Activated naive CD4-positive, alpha-beta T cell treated with anti-CD3 and anti-CD28 coated beads for 36 hours (primary cell): ENCODE measurements at regions of chr15 and their contacts with region 1.

Region 1: DNA sequence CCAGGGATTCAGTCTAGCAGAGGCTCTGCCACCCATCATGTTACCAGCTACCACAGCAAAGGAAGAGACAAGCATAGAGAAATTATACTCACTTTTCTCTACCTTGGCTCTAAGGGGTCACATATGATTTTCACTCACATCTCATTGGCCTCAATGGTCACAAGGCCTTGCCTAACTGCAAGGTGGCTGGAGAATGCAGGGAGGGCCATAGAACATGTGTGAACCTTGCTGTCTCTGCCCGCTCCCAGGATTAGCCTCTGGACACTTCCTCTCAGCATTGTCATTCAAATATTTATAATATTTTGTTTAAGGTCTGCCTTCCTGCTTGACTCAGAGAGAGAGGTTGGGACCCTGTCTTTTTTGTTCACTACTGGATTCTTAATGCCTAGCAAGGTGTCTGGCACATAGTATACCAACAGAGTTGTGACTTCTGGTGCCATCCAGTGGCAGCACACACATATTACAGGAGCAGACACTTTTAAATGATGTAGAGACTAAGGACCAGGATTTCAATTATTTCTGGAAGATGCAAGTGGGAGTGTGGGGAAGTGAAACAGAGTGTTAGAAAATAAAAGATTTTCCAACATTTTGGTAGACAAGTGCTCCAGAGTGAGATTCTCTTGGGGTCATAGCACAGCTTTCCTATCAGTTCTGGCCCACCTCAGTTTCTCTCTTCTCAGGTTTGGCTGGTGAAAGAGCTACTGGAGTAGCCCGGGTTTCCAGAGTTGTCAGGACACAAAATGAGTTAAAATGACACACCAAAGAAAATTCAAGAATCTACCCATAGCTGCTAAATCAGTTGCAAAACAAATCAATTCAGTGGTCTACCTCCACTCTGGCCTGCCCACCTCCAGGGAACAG is 119.0 kb upstream of the RASGRP1 start:
- DNase-seq: peak; percentile 89
- H3K4me3 Mint-ChIP-seq: no peak overlapping the region
- H3K27ac Mint-ChIP-seq: peak overlapping the region; percentile 38
- H3K4me1 Mint-ChIP-seq: peaks cover 66% of the 10 kb centered on the region
- H3K27me3 Mint-ChIP-seq: no peaks in the 10 kb centered on the region

Region 2: GRCh38 chr15:38217191-38217595 is 466.4 kb before region 1 on chr15:
- CTCF ChIA-PET with region 1: no interaction called
- intact Hi-C with region 1: no loop called
- DNase-seq: peak; percentile 7
- H3K4me3 Mint-ChIP-seq: no peak overlapping the region
- H3K27ac Mint-ChIP-seq: no peak overlapping the region
- H3K4me1 Mint-ChIP-seq: peaks cover 2% of the 10 kb centered on the region
- H3K27me3 Mint-ChIP-seq: peaks cover 3% of the 10 kb centered on the region

Region 3: GRCh38 chr15:38474155-38474757 is 209.4 kb before region 1 on chr15:
- CTCF ChIA-PET with region 1: interaction called, 58 read pairs
- intact Hi-C with region 1: loop called (anchors 1 kb)
- DNase-seq: peak; percentile 30
- H3K4me3 Mint-ChIP-seq: no peak overlapping the region
- H3K27ac Mint-ChIP-seq: peak overlapping the region; percentile 55
- H3K4me1 Mint-ChIP-seq: peaks cover 4% of the 10 kb centered on the region
- H3K27me3 Mint-ChIP-seq: no peaks in the 10 kb centered on the region

Region 4: GRCh38 chr15:38610748-38611147 is 72.9 kb before region 1 on chr15:
- CTCF ChIA-PET with region 1: interaction called, 14 read pairs
- intact Hi-C with region 1: loop called (anchors 2 kb)
- DNase-seq: peak; percentile 32
- H3K4me3 Mint-ChIP-seq: no peak overlapping the region
- H3K27ac Mint-ChIP-seq: peak overlapping the region; percentile 61
- H3K4me1 Mint-ChIP-seq: peaks cover 40% of the 10 kb centered on the region
- H3K27me3 Mint-ChIP-seq: no peaks in the 10 kb centered on the region

Region 5: DNA sequence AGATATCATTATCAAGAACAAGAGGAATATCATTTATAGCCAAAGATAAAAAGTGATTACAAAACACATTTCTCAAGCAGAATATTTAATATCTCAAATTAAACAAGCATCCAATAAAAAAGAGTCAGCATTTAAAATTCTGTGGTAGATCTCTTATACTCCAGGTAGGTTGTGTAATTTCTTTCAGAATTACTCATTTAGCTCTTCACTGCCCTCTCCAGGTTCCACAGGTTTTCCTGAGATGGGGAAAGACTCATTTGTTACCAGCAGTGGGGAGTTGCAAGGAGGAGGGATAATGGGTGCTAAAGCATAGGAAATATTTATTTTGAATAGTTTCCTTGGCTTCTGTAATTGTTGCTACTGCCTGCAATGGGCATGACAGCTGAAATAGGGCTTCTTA is 35.9 kb before region 1 on chr15:
- CTCF ChIA-PET with region 1: interaction called, 38 read pairs
- intact Hi-C with region 1: no loop called
- DNase-seq: no peak
- H3K4me3 Mint-ChIP-seq: no peak overlapping the region
- H3K27ac Mint-ChIP-seq: no peak overlapping the region
- H3K4me1 Mint-ChIP-seq: peaks cover 68% of the 10 kb centered on the region
- H3K27me3 Mint-ChIP-seq: no peaks in the 10 kb centered on the region

Region 6: DNA sequence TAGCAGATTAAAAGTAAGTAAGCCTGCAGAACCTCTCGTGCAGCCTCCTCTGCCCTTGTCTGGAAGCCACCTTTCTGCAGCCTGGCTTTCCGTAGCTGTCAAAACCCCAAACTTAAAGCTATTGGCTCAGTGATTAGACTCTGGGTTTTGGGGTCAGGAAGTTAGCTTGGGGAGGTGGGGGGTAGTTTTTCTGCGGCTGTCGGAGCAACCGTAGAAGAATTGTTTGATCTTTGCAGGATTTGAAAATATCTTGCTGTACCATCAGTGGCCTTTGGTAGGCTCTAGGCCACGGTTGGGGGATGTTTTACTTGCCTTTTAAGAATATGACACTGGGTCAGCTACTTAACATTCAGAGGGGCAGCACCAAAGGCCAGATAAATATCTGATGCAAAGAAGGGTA is 30.6 kb before region 1 on chr15:
- CTCF ChIA-PET with region 1: interaction called, 38 read pairs
- intact Hi-C with region 1: loop called (anchors 1 kb)
- DNase-seq: peak; percentile 74
- H3K4me3 Mint-ChIP-seq: peak overlapping the region; percentile 66
- H3K27ac Mint-ChIP-seq: peak overlapping the region; percentile 81
- H3K4me1 Mint-ChIP-seq: peaks cover 70% of the 10 kb centered on the region
- H3K27me3 Mint-ChIP-seq: no peaks in the 10 kb centered on the region

Region 7: DNA sequence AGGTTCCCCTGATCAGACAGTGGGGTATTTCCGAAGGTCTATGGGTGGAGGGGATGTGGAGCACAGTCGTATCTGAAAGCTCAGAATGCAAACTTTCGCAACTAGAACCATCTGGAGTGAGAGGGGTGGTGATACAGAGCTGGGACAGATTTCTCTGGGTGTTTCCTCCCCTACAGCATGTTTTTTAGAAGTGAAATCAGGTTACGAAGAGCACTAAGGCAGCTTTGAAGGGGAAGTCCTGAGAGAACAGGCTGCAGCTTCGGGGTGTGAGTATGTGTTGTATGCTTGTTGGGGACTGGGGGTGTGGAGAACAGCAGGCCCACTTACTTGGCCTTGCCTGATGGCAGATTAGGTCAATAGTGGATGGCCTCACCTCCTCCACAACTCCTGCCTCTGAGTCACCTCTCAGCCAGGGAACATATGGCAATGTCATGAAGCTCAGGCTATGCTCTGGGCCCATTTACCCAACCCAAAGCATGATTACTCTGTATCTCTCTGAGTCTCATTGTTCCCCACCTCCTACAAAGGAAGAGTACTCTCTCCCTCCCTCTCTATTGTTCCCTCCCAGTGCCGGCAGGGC is 11.8 kb before region 1 on chr15:
- CTCF ChIA-PET with region 1: interaction called, 97 read pairs
- intact Hi-C with region 1: loop called (anchors 1 kb)
- DNase-seq: peak; percentile 69
- H3K4me3 Mint-ChIP-seq: peak overlapping the region; percentile 54
- H3K27ac Mint-ChIP-seq: peak overlapping the region; percentile 94
- H3K4me1 Mint-ChIP-seq: peaks cover 69% of the 10 kb centered on the region
- H3K27me3 Mint-ChIP-seq: no peaks in the 10 kb centered on the region

Region 8: GRCh38 chr15:38699633-38700230 is 16.1 kb after region 1 on chr15:
- CTCF ChIA-PET with region 1: interaction called, 106 read pairs
- intact Hi-C with region 1: no loop called
- DNase-seq: peak; percentile 83
- H3K4me3 Mint-ChIP-seq: no peak overlapping the region
- H3K27ac Mint-ChIP-seq: peak overlapping the region; percentile 41
- H3K4me1 Mint-ChIP-seq: peaks cover 47% of the 10 kb centered on the region
- H3K27me3 Mint-ChIP-seq: no peaks in the 10 kb centered on the region